Heart left ventricle (tissue), 16 donors: ENCODE measurements at regions of chr1 and their contacts with region 1.

Region 1: DNA sequence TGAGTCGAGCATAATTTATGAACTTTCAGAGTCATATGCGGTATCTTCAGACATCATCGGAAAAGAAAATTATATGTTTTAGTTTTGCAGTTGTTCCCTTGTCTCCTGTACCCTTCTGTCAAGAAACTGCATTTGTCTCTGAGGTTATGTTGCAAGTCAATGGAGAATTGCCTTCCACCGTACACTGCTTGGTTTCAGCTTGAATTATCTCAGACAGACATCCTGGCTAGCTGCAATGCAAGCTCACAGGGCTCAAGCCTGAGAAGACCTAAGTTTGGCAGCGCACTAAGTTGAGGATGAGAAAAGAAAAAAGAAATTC is 156.0 kb downstream of the NFIA start:
- DNase-seq: no peak
- ATAC-seq: peak in 2 of 4 donors; percentile 28 to 31
- H3K4me3 ChIP-seq: no peak overlapping the region
- H3K27ac ChIP-seq: peak overlapping the region in 1 of 12 donors; percentile 46
- H3K4me1 ChIP-seq: peaks cover 0 to 54% (median 27%) of the 10 kb centered on the region in 12 donors
- H3K27me3 ChIP-seq: no peaks in the 10 kb centered on the region
- CTCF ChIP-seq: no peak
- POLR2A ChIP-seq: no peak

Region 2: DNA sequence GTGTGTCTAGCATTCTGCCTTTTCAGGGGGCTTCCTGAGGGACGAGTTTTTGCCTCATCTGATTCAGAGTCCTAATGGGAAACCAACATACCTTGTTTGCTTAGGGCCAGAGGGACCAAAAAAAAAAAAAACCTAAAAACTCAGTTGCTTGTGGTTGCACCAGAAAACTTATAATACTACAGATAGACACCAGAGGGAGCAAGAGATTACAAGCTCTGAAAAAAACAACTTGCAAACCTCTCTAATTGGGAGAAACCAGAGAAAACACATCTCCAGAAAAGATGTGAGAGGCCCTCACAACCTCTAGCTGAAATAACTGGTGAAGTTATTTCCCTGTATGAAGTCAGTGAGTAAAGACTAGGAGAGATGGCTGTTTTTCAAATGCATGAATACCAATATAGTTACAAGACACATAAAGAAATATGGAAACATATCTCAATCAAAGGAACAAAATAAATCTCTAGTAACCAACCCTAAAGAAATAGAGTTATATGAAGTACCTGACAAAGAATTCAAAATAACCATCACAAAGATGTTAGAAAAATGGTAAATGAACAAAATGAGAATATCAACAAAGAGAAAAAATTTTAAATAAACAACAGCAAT is 389.6 kb before region 1 on chr1:
- intact Hi-C with region 1: no loop called
- DNase-seq: no peak
- ATAC-seq: no peak
- H3K4me3 ChIP-seq: no peak overlapping the region
- H3K27ac ChIP-seq: no peak overlapping the region
- H3K4me1 ChIP-seq: peaks cover 0 to under 1% (median 0%) of the 10 kb centered on the region in 12 donors
- H3K27me3 ChIP-seq: no peaks in the 10 kb centered on the region
- CTCF ChIP-seq: peak; percentile 29 to 62 (median 52)
- POLR2A ChIP-seq: no peak

Region 3: GRCh38 chr1:61337981-61338848 is 99.9 kb after region 1 on chr1:
- intact Hi-C with region 1: loop called in 1 of 10 experiments (anchors 5 kb)
- DNase-seq: peak in 4 of 5 donors; percentile 62 to 74 (median 72)
- ATAC-seq: peak; percentile 84 to 90 (median 87)
- H3K4me3 ChIP-seq: peak overlapping the region in 9 of 12 donors; percentile 3 to 45 (median 14)
- H3K27ac ChIP-seq: peak overlapping the region; percentile 42 to 86 (median 70)
- H3K4me1 ChIP-seq: peaks cover 2 to 56% (median 35%) of the 10 kb centered on the region in 12 donors
- H3K27me3 ChIP-seq: no peaks in the 10 kb centered on the region
- CTCF ChIP-seq: peak; percentile 48 to 76 (median 66)
- POLR2A ChIP-seq: no peak